HepG2 (cell line): ENCODE measurements at regions of chr9 and their contacts with region 1.

Region 1: GRCh38 chr9:117644133-117644931 is 59.9 kb upstream of the TLR4 start:
- DNase-seq: peak; percentile 46
- ATAC-seq: peak; percentile 84
- H3K4me3 ChIP-seq: no peak overlapping the region
- H3K27ac ChIP-seq: no peak overlapping the region
- H3K4me1 ChIP-seq: no peaks in the 10 kb centered on the region
- H3K27me3 ChIP-seq: 0 out of 5 replicates have a peak, but pooled peaks cover 0 to 9% of the 10 kb centered on the region in 2 experiments
- CTCF ChIP-seq: peak; percentile 90
- EP300 ChIP-seq: no peak
- POLR2A ChIP-seq: no peak
- RAD21 ChIP-seq: peak; percentile 56

Region 2: GRCh38 chr9:117487555-117488175 is 156.7 kb before region 1 on chr9:
- CTCF ChIA-PET with region 1: no interaction called
- POLR2A ChIA-PET with region 1: no interaction called
- in situ Hi-C with region 1: no loop called
- intact Hi-C with region 1: loop called (anchors 2 kb)
- DNase-seq: peak; percentile 72
- ATAC-seq: peak; percentile 93
- H3K4me3 ChIP-seq: peak overlapping the region; percentile 43 to 62 (median 46)
- H3K27ac ChIP-seq: peak overlapping the region; percentile 74
- H3K4me1 ChIP-seq: peaks cover 58% of the 10 kb centered on the region
- H3K27me3 ChIP-seq: no peaks in the 10 kb centered on the region
- CTCF ChIP-seq: peak; percentile 100
- EP300 ChIP-seq: peak in 1 of 2 experiments; percentile 76; a peak in 1 of 4 replicates
- POLR2A ChIP-seq: no peak
- RAD21 ChIP-seq: peak; percentile 98

Region 3: GRCh38 chr9:117782931-117783788 is 138.8 kb after region 1 on chr9:
- CTCF ChIA-PET with region 1: no interaction called
- POLR2A ChIA-PET with region 1: no interaction called
- in situ Hi-C with region 1: no loop called
- intact Hi-C with region 1: loop called (anchors 10 kb)
- DNase-seq: peak; percentile 23
- ATAC-seq: peak; percentile 92
- H3K4me3 ChIP-seq: peak overlapping the region in 1 of 3 experiments; percentile 46; a peak in 2 of 6 replicates
- H3K27ac ChIP-seq: no peak overlapping the region
- H3K4me1 ChIP-seq: no peaks in the 10 kb centered on the region
- H3K27me3 ChIP-seq: no peaks in the 10 kb centered on the region
- CTCF ChIP-seq: peak; percentile 75
- EP300 ChIP-seq: no peak
- POLR2A ChIP-seq: no peak
- RAD21 ChIP-seq: peak; percentile 66

Region 4: DNA sequence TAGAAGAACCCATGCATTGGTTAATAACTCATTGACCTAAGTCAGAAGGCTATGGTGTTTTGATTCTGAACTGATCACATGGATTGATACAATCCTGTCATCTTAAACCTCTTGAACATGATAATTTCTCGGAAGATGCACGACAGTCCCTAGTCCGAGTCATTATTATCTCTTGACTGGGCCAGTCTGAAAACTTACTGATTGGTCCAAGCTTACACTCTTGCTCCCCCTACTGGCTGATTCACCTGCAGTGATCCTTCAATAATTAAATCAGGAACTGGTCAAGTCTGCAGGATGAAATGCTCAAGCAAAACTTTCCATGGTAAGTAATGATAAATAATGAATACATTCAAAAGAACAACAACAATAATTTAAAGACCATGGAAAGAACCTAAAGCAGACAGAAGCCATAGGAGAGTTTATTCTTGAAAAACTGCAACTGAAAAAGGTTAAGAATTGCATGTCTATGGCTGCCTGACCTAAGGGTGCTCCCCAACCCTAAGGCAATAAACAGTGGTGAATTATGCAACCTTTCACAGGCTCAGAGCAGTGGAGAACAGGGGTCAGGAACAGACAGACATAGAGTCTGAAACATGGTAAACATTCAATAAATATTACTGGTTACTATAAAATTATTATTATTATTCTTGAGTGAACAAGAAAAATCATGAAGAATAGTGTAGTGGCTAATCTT is 1645.6 kb after region 1 on chr9:
- CTCF ChIA-PET with region 1: no interaction called
- POLR2A ChIA-PET with region 1: no interaction called
- in situ Hi-C with region 1: no loop called
- intact Hi-C with region 1: loop called (anchors 5 kb)
- DNase-seq: peak; percentile 32
- ATAC-seq: peak; percentile 40; the same call in 1 of the 3 replicates
- H3K4me3 ChIP-seq: no peak overlapping the region
- H3K27ac ChIP-seq: no peak overlapping the region
- H3K4me1 ChIP-seq: no peaks in the 10 kb centered on the region
- H3K27me3 ChIP-seq: no peaks in the 10 kb centered on the region
- CTCF ChIP-seq: peak; percentile 34; the same call in 1 of the 2 replicates
- EP300 ChIP-seq: no peak
- POLR2A ChIP-seq: no peak
- RAD21 ChIP-seq: no peak

Region 5: DNA sequence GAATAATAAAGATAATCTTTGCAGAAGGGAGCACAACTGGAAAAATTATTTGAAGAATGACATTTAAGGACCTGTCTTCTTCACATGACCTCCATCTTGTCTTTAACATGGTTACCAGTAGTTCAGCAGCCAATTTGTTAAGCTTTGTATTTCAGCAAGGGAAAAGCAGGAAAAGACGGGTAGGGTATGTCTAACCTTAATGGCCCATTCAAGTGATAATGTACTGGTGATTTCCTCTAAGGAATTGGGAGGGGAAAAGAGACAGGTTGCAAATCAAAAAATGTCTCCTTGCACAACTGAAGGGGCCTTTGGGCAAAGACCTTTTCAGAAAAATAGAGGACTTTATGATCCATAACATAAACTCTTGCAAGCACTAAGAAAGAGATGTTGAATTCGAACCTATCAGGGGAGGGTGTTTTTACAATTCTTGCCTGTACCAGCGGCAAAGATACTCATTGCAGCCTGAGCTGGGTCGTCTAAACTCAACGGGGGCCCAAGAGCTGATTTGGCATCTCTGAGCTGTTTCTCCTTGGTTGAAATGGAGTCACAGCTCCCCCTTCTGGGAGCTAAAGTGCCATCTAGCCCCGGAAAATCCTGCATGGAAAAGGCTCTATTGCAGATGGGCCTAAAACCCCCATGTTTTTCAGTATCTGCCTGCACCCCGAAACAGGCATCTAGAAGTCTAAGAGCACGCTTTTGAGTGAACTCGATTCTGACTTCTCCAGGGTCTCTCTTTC is 1721.1 kb after region 1 on chr9:
- CTCF ChIA-PET with region 1: interaction called, 9 read pairs
- POLR2A ChIA-PET with region 1: no interaction called
- in situ Hi-C with region 1: loop called (anchors 10 kb)
- intact Hi-C with region 1: no loop called
- DNase-seq: peak; percentile 6
- ATAC-seq: peak; percentile 63; the same call in 2 of the 3 replicates
- H3K4me3 ChIP-seq: no peak overlapping the region
- H3K27ac ChIP-seq: no peak overlapping the region
- H3K4me1 ChIP-seq: no peaks in the 10 kb centered on the region
- H3K27me3 ChIP-seq: no peaks in the 10 kb centered on the region
- CTCF ChIP-seq: peak; percentile 65
- EP300 ChIP-seq: no peak
- POLR2A ChIP-seq: no peak
- RAD21 ChIP-seq: peak; percentile 32; the same call in 1 of the 2 replicates